ENCODE measurements at regions of chr7 and their contacts with region 1.

Region 1: DNA sequence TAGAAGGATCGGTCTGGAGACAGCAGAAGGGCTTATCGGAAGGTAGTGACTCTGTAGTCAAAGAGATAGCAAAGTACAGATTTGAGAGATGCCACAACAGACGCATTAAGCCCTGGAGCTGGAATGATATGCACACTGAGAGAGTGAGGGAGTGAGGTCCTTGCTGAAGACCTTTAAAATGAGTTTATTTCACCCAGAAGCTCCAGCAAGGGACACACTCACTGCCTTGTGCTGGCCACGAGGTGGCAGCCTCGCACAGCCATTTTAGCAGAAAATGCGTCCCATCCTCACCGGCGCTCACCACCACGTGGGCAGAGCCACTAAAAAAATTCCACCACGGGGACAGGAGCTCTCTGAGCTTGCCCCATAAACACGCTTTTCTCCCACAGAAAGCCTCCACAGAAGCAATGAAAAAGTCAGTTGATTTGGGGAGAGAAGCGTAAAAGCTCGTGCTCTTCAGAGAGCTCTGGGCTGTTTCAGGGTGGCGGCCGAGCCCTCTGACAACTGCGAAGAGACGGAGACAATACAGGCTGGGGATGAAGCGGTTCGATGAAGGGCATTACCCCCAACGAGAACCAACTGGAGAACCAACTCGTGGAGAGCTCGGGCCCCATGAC is 163.0 kb upstream of the KLF14 start:
- DNase-seq: no peak
- H3K4me3 ChIP-seq: no peak overlapping the region
- H3K27ac ChIP-seq: peak overlapping the region; percentile 50 to 77 (median 62)
- H3K4me1 ChIP-seq: peaks cover 80 to 96% (median 90%) of the 10 kb centered on the region in 4 donors
- H3K27me3 ChIP-seq: no peaks in the 10 kb centered on the region
- CTCF ChIP-seq: peak; percentile 87 to 89 (median 87)
- EP300 ChIP-seq: no peak
- POLR2A ChIP-seq: no peak

Region 2: DNA sequence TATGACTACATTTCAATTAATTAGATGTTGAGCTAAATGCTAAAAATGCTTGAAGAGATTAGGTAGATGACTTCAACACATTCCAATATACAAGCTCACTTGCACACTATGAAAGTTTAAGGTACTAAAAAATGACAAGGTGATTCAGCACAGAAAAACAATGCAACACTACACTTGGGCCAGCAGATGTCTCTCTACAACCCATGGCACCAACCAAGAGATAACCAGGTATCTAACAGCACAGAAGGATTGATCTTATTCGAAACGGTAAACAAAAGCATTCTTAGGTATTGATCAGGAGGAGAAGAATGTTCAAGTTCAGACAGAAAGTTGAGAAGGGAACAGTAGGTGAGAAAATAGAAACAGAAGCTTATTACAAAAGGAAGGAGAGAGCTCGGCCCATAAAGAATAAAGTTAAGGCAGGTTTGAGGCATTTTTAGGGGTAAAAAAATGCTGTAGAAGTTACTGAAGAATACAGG is 85.2 kb after region 1 on chr7:
- intact Hi-C with region 1: no loop called
- DNase-seq: no peak
- H3K4me3 ChIP-seq: no peak overlapping the region
- H3K27ac ChIP-seq: peak overlapping the region in 3 of 4 donors; percentile 26 to 45 (median 44)
- H3K4me1 ChIP-seq: peaks cover 46 to 71% (median 66%) of the 10 kb centered on the region in 4 donors
- H3K27me3 ChIP-seq: no peaks in the 10 kb centered on the region
- CTCF ChIP-seq: peak; percentile 59 to 68 (median 62)
- EP300 ChIP-seq: no peak
- POLR2A ChIP-seq: no peak

Region 3: DNA sequence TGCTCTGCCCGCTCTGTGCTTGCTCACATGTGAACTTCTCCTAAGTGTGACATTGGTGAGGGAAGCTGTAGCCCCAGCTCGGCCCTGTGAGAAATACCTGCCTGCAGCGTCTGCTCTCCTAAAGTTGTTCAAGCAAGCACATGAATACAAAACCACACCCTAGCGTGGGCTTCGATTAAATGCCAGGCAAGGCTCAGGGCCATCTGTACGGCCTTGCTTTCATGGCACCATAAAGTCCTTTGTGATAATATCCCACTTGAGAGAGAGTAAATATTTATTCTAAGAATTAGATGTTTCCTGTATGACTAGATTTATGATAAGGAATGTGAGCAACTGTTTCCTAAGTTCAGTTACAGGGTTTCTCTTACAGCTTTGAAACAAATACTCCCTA is 99.8 kb after region 1 on chr7:
- intact Hi-C with region 1: loop called (anchors 5 kb)
- DNase-seq: peak; percentile 70
- H3K4me3 ChIP-seq: peak overlapping the region in 1 of 4 donors; percentile 19
- H3K27ac ChIP-seq: peak overlapping the region; percentile 78 to 85 (median 80)
- H3K4me1 ChIP-seq: peaks cover 73 to 94% (median 92%) of the 10 kb centered on the region in 4 donors
- H3K27me3 ChIP-seq: no peaks in the 10 kb centered on the region
- CTCF ChIP-seq: no peak
- EP300 ChIP-seq: no peak
- POLR2A ChIP-seq: no peak

Region 4: GRCh38 chr7:131007394-131008330 is 110.7 kb after region 1 on chr7:
- intact Hi-C with region 1: loop called (anchors 5 kb)
- DNase-seq: no peak
- H3K4me3 ChIP-seq: peak overlapping the region in 1 of 4 donors; percentile 1
- H3K27ac ChIP-seq: peak overlapping the region; percentile 72 to 83 (median 77)
- H3K4me1 ChIP-seq: peaks cover 46 to 79% (median 68%) of the 10 kb centered on the region in 4 donors
- H3K27me3 ChIP-seq: no peaks in the 10 kb centered on the region
- CTCF ChIP-seq: peak; percentile 63 to 74 (median 63)
- EP300 ChIP-seq: no peak
- POLR2A ChIP-seq: no peak

Region 5: DNA sequence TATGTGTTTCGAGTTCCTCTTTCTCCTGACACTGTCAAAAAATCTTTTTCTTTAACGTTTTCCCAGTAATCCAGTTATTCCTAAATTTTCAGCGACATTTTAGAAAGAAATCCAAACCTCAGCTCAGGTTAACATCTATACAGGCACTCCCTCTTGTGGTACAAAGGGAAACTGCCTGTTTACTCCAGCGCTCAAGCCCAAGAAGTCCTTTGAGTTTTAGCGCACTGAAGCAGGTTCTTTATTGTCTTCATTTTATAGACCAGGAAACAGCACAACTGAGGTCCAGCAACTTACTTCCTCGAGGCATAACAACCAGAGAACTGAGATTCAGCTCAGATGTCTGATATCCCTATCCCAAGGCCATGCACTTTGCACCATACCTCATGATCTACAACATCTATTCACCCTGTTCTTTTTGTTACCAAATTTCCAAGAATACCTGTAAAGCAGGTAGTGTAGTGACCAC is 143.5 kb after region 1 on chr7:
- intact Hi-C with region 1: loop called (anchors 5 kb)
- DNase-seq: no peak
- H3K4me3 ChIP-seq: no peak overlapping the region
- H3K27ac ChIP-seq: peak overlapping the region; percentile 25 to 49 (median 40)
- H3K4me1 ChIP-seq: peaks cover 29 to 75% (median 52%) of the 10 kb centered on the region in 4 donors
- H3K27me3 ChIP-seq: no peaks in the 10 kb centered on the region
- CTCF ChIP-seq: peak; percentile 89 to 94 (median 92)
- EP300 ChIP-seq: no peak
- POLR2A ChIP-seq: no peak